Cardiac septum (tissue), 1 donor: ENCODE measurements at regions of chr5 and their contacts with region 1.

Region 1: GRCh38 chr5:39760385-39761198 is 335.8 kb upstream of the DAB2 start:
- DNase-seq: no peak

Region 2: GRCh38 chr5:39608024-39608423 is 152.6 kb before region 1 on chr5:
- intact Hi-C with region 1: no loop called
- DNase-seq: no peak

Region 3: DNA sequence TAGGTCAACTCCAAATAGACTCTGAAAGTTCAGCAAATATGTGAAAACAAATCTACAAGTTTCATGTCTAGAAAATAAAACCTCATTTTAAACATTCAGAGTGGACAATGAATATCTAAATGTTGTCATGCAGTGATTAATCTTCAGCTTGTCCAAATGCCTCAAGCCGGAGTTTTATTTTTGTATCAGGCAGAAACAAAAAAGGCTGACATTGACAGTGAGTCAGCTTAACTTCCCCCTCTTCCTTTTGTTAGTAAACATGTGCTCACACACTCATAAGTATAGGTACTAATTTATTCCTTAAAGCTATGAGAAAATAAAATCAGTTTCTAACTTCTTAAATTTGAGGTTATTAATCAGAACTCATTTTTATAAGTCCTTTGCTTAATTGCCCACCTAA is 132.1 kb after region 1 on chr5:
- intact Hi-C with region 1: loop called (anchors 5 kb)
- DNase-seq: no peak

Region 4: DNA sequence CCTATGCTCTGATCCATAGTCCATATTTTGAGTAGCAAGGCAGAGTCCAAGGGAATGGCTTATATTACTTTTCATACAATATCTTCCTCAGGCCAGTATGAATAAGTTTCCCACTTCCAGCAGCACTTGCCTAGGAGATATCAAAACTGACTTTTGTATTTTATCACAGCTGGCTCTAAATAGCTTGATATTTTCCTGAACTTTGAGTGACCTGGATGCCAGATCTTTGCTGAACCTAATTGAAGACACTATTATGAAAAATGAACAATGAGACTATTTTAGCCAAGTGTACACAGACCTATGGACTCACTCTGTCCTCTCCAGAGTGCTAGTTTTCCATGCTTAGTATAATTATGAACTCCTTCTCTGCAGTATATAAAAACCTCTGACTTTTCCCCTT is 443.6 kb after region 1 on chr5:
- intact Hi-C with region 1: no loop called
- DNase-seq: no peak